Activated B cell treated with CpG ODN at 0.5 μM for 24 hours (primary cell): ENCODE measurements at regions of chr3 and their contacts with region 1.

Region 1: GRCh38 chr3:112489674-112490479 is 9.4 kb downstream of the BTLA start:
- DNase-seq: no peak
- ATAC-seq: peak; percentile 29
- H3K4me3 Mint-ChIP-seq: peak overlapping the region; percentile 69
- H3K27ac Mint-ChIP-seq: peak overlapping the region; percentile 86
- H3K4me1 Mint-ChIP-seq: peaks cover 79% of the 10 kb centered on the region
- H3K27me3 Mint-ChIP-seq: no peaks in the 10 kb centered on the region
- CTCF ChIP-seq: no peak

Region 2: DNA sequence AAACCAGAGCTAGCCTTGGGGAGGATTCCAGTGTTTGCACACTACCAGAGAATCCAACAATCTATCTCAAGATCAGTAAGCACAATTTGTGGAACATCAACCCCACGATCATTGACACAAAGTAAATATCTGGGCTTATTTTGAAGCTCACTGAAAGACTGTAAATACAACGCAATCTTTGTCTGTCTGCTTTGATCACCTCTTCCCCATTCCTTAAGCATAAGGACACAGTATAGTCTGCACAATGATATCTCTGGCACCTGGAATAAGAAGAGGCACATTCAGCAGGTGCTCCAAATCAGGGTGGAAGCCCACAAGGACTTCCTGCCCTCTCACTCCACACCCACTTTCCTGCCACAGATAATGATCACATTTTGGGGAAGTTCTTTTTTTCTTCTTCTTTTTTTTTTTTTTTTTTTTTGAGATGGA is 16.7 kb before region 1 on chr3:
- CTCF ChIA-PET with region 1: no interaction called
- POLR2A ChIA-PET with region 1: interaction called, 8 read pairs
- intact Hi-C with region 1: loop called (anchors 1 kb)
- DNase-seq: no peak
- ATAC-seq: peak; percentile 80
- H3K4me3 Mint-ChIP-seq: peak overlapping the region; percentile 82
- H3K27ac Mint-ChIP-seq: peak overlapping the region; percentile 98
- H3K4me1 Mint-ChIP-seq: peaks cover 88% of the 10 kb centered on the region
- H3K27me3 Mint-ChIP-seq: no peaks in the 10 kb centered on the region
- CTCF ChIP-seq: no peak

Region 3: GRCh38 chr3:112505907-112506306 is 16.0 kb after region 1 on chr3:
- CTCF ChIA-PET with region 1: no interaction called
- POLR2A ChIA-PET with region 1: interaction called, 32 read pairs
- intact Hi-C with region 1: no loop called
- DNase-seq: no peak
- ATAC-seq: peak; percentile 18
- H3K4me3 Mint-ChIP-seq: peak overlapping the region; percentile 12
- H3K27ac Mint-ChIP-seq: peak overlapping the region; percentile 84
- H3K4me1 Mint-ChIP-seq: peaks cover 93% of the 10 kb centered on the region
- H3K27me3 Mint-ChIP-seq: no peaks in the 10 kb centered on the region
- CTCF ChIP-seq: no peak